GM12878 (cell line): ENCODE measurements at regions of chr13 and their contacts with region 1.

Region 1: DNA sequence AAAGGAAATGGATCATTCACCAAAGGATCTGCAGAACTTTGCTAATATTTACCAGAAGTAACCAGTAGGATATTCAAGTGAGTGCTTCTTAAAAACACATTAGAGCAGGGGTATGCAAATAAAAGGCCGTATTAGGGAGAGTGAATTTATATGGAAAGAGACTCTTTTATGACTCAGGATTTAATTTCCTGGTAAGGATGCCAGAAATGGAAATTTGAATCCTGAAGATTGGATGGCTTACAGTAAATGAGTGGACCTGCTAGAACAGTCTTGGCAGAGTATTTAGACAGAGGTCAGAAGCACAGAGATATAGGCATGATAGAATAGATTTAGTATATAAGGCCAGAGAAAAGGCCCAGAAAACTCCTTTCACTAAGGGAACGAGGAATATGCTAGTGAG is 201.6 kb downstream of the SLITRK5 start:
- DNase-seq: no peak
- ATAC-seq: no peak
- H3K4me3 ChIP-seq: no peak overlapping the region
- H3K27ac ChIP-seq: no peak overlapping the region
- H3K4me1 ChIP-seq: no peaks in the 10 kb centered on the region
- H3K27me3 ChIP-seq: no peaks in the 10 kb centered on the region
- CTCF ChIP-seq: no peak
- EP300 ChIP-seq: no peak
- POLR2A ChIP-seq: no peak
- RAD21 ChIP-seq: no peak

Region 2: GRCh38 chr13:87524775-87525174 is 348.0 kb before region 1 on chr13:
- CTCF ChIA-PET with region 1: no interaction called
- POLR2A ChIA-PET with region 1: no interaction called
- RAD21 ChIA-PET with region 1: no interaction called
- SMC1A ChIA-PET with region 1: no interaction called
- in situ Hi-C with region 1: no loop called
- intact Hi-C with region 1: no loop called
- DNase-seq: no peak
- ATAC-seq: peak; percentile 81
- H3K4me3 ChIP-seq: no peak overlapping the region
- H3K27ac ChIP-seq: no peak overlapping the region
- H3K4me1 ChIP-seq: no peaks in the 10 kb centered on the region
- H3K27me3 ChIP-seq: no peaks in the 10 kb centered on the region
- CTCF ChIP-seq: no peak
- EP300 ChIP-seq: no peak
- POLR2A ChIP-seq: no peak
- RAD21 ChIP-seq: no peak

Region 3: DNA sequence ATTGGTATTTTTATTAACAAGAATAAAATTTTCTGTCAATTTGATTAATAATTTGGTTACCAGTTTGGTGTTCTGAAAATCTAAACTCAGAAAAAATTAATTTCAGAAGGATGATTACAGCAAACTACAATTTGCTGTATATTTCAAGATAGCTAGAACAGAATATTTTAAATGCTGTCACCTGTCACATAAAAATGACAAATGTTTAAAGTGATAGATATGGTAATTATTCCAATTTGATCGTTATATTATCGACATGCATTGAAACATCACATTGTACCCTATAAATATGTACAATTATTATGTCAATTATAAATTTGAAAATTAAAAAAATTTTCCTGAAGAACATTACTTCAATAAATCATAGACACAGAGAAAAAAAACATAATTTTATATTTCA is 258.5 kb before region 1 on chr13:
- CTCF ChIA-PET with region 1: no interaction called
- POLR2A ChIA-PET with region 1: no interaction called
- RAD21 ChIA-PET with region 1: no interaction called
- SMC1A ChIA-PET with region 1: no interaction called
- in situ Hi-C with region 1: no loop called
- intact Hi-C with region 1: no loop called
- DNase-seq: no peak
- ATAC-seq: no peak
- H3K4me3 ChIP-seq: no peak overlapping the region
- H3K27ac ChIP-seq: no peak overlapping the region
- H3K4me1 ChIP-seq: no peaks in the 10 kb centered on the region
- H3K27me3 ChIP-seq: no peaks in the 10 kb centered on the region
- CTCF ChIP-seq: no peak
- EP300 ChIP-seq: no peak
- POLR2A ChIP-seq: no peak
- RAD21 ChIP-seq: no peak

Region 4: DNA sequence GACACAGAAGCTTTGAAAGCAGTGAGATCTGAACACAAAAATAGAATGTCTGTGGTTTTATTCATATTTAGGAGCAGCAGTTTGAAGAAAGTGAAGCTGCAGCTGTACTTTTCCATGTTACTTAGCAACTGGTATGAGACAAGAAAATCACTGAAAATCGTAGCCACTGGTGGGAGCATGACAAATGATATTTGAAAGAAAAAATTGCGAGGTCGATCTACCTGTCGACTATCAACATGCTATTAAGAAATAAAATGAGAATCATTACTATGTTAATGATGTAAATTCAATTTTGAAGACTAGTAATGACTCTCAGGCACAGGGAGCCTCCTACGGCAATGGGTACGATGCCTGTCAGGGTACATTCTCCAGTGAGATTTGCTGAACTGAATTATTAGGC is 234.8 kb after region 1 on chr13:
- CTCF ChIA-PET with region 1: no interaction called
- POLR2A ChIA-PET with region 1: interaction called, 11 read pairs
- RAD21 ChIA-PET with region 1: no interaction called
- SMC1A ChIA-PET with region 1: no interaction called
- in situ Hi-C with region 1: no loop called
- intact Hi-C with region 1: no loop called
- DNase-seq: no peak
- ATAC-seq: no peak
- H3K4me3 ChIP-seq: no peak overlapping the region
- H3K27ac ChIP-seq: no peak overlapping the region
- H3K4me1 ChIP-seq: no peaks in the 10 kb centered on the region
- H3K27me3 ChIP-seq: no peaks in the 10 kb centered on the region
- CTCF ChIP-seq: no peak
- EP300 ChIP-seq: no peak
- POLR2A ChIP-seq: no peak
- RAD21 ChIP-seq: no peak

Region 5: DNA sequence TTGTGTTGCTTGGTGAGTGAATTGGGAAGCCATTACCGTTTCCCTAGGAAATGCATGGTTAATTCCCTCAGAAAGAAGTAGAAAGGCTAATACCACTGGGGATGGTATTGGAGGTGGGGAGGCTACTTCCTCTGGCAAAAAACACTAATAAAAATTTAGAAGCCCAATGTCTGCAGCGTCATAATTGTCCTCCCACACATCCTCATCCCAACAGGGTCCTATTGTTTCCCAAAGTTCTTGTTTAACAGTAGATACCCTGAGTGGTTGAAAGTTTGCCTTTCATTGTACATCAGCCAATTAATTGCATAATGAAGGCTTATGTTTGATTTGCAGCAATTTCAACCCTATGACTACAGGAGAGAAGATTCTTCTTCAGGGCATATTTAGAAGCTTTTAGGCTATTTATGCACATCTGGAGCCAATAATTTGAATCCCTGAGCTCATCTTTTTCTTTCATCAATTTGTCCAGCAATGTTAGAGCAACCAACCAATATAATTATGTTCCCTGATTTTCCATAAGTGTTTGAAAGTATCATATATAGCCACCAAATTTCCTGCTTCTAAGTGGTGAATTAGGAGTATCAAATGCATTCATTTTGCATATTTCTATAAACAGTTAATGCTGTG is 289.4 kb after region 1 on chr13:
- CTCF ChIA-PET with region 1: no interaction called
- POLR2A ChIA-PET with region 1: no interaction called
- RAD21 ChIA-PET with region 1: no interaction called
- SMC1A ChIA-PET with region 1: no interaction called
- in situ Hi-C with region 1: no loop called
- intact Hi-C with region 1: no loop called
- DNase-seq: no peak
- ATAC-seq: no peak
- H3K4me3 ChIP-seq: no peak overlapping the region
- H3K27ac ChIP-seq: no peak overlapping the region
- H3K4me1 ChIP-seq: no peaks in the 10 kb centered on the region
- H3K27me3 ChIP-seq: no peaks in the 10 kb centered on the region
- CTCF ChIP-seq: no peak
- EP300 ChIP-seq: no peak
- POLR2A ChIP-seq: no peak
- RAD21 ChIP-seq: no peak